OCI-LY7 (cell line): ENCODE measurements at regions of chr2 and their contacts with region 1.

Region 1: GRCh38 chr2:119753041-119753929 is 6.4 kb upstream of the PTPN4 start:
- DNase-seq: peak; percentile 65
- H3K4me3 ChIP-seq: no peak overlapping the region
- H3K27ac ChIP-seq: no peak overlapping the region
- H3K4me1 ChIP-seq: no peaks in the 10 kb centered on the region
- CTCF ChIP-seq: peak; percentile 89

Region 2: DNA sequence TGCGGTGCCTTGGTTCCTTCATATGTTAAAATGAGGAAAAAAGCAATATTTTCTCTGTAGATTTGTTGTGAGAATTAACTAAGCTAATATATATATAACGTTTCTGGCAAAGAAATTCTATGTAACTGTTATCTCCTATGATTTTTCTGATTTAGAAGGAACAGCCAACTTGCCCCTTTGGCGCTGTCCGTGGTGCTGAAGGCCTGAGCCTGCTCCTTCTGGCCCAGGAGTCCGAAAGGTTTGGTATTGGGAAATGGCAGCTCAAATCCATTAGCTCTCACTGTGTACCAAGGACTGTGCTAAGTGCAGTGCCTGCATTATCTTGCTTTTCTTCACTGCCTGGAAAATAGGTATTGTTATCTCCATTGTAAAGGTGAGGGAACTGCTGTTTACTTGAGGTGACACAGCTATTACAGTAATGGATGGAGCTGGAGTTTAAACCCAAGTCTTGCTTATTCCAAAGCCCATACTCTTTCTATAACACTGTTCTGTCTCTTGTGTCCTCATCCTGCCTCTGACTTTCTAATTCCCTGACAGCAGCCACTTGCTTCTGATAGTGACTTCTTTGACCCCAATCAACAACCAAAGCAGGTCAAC is 646.9 kb before region 1 on chr2:
- CTCF ChIA-PET with region 1: no interaction called
- POLR2A ChIA-PET with region 1: no interaction called
- intact Hi-C with region 1: no loop called
- DNase-seq: peak; percentile 37
- H3K4me3 ChIP-seq: no peak overlapping the region
- H3K27ac ChIP-seq: no peak overlapping the region
- H3K4me1 ChIP-seq: no peaks in the 10 kb centered on the region
- CTCF ChIP-seq: no peak

Region 3: DNA sequence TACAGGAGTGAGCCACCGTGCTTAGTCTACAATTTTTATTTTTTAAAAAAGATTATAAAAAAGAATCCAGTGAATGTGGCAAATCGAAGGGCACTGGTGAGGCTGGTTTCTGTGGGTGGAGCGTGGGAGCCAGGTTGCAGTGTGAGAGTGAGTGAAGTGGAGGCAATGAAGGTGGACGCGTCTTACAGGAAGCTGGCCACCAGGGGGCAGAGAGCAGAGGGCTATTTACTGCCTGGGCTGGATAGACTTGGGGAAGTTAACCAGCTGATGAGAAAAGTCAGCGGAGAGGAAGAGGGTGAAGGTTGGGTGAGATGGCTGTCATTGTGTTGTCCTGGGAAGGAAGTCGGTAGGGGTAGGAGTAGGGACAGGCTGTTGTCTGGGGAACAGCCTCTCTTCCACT is 235.9 kb before region 1 on chr2:
- CTCF ChIA-PET with region 1: no interaction called
- POLR2A ChIA-PET with region 1: no interaction called
- intact Hi-C with region 1: no loop called
- DNase-seq: peak; percentile 47
- H3K4me3 ChIP-seq: no peak overlapping the region
- H3K27ac ChIP-seq: no peak overlapping the region
- H3K4me1 ChIP-seq: no peaks in the 10 kb centered on the region
- CTCF ChIP-seq: peak; percentile 82

Region 4: DNA sequence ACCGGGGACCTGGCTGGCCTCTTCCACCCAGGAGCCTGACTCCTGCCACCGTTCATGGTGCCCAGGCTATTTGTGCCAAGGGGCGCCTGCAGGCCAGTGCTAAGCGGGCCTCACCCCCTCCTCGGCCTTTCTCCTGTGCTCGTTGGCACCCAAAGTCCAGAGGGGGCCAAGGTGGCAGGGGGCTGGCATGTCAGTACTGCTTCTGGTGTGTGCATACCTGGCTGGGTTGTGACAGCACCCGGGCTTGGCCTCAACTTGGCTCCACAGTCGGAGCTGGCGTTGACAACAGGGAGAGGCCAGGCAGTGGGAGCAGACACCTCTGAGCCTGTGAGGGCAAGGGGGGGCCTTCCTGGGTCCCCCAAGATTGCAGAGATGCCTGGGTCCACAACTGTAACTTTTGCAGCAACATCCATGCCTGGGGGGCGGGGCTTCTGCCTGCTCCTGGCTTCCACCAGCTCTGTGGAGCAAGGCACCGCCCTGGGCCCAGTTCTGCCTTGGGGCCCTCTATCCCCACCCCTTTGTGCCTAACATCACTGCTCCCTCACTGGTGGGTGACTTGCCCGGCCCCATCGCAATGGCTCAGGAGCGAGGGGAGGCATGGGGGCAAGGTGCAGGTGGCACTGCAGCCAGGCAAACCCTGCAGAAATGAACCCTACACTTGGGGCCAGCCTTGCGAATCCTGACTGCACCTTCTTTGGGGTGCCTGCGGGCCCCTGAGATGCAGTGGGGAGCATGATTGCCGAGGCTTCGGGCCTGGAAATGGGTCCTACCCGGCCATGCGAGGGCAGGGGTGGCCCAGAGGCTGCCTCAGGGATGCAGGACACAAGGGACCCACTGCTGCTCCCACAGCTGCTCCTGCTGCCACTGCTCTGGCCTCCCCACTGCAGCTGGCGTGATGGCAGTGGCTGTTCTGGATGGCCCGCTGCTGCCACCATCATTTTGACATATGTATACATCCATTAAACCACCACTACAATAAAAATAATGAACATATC is 42.3 kb after region 1 on chr2:
- CTCF ChIA-PET with region 1: no interaction called
- POLR2A ChIA-PET with region 1: no interaction called
- intact Hi-C with region 1: no loop called
- DNase-seq: no peak
- H3K4me3 ChIP-seq: no peak overlapping the region
- H3K27ac ChIP-seq: no peak overlapping the region
- H3K4me1 ChIP-seq: no peaks in the 10 kb centered on the region
- CTCF ChIP-seq: no peak

Region 5: GRCh38 chr2:119826370-119826961 is 73.2 kb after region 1 on chr2:
- CTCF ChIA-PET with region 1: no interaction called
- POLR2A ChIA-PET with region 1: no interaction called
- intact Hi-C with region 1: loop called (anchors 1 kb)
- DNase-seq: peak; percentile 51
- H3K4me3 ChIP-seq: no peak overlapping the region
- H3K27ac ChIP-seq: no peak overlapping the region
- H3K4me1 ChIP-seq: no peaks in the 10 kb centered on the region
- CTCF ChIP-seq: peak; percentile 85

Region 6: DNA sequence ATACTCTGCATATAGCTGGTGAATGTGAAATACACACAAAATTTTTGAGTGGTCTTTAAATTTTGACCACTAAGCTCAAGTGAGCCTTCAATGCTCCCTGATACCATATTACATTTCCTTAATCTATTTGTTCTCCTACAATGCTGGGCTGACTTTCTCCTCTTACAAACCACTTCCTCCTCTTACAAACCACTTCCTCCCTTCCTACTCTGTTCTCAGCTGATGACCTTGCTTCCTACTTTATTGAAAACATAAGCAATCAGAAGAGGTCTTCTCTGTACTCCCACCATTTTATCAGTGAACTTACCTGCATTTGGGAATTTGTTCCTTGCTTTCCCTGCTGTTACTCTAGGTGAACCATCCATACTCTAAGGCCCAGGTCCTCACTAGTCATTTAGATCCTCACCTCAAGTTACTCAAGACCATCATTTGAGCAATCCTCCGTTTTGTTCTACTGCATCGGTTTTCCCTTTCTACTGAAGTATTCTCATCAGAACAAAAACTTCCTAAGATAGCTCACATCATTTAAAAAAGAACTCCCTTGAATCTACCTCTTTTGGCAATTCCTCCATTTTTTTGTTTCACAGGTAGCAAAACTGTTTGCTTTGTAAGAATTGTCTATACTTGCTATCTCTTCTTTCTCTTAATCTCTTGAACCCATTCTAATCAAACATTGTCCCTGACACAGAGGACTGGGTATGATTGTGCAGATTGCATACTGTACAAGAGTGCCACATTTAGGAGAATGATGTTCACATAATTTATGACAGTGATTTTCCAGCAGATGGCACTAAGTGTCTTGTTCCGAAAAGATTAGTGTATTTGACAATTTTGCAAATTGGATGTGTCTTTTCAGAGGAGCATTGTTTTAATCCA is 356.1 kb after region 1 on chr2:
- CTCF ChIA-PET with region 1: no interaction called
- POLR2A ChIA-PET with region 1: no interaction called
- intact Hi-C with region 1: loop called (anchors 5 kb)
- DNase-seq: peak; percentile 68
- H3K4me3 ChIP-seq: peak overlapping the region; percentile 17
- H3K27ac ChIP-seq: no peak overlapping the region
- H3K4me1 ChIP-seq: peaks cover 17% of the 10 kb centered on the region
- CTCF ChIP-seq: peak; percentile 86